ENCODE measurements at regions of chr16 and their contacts with region 1.

Region 1: DNA sequence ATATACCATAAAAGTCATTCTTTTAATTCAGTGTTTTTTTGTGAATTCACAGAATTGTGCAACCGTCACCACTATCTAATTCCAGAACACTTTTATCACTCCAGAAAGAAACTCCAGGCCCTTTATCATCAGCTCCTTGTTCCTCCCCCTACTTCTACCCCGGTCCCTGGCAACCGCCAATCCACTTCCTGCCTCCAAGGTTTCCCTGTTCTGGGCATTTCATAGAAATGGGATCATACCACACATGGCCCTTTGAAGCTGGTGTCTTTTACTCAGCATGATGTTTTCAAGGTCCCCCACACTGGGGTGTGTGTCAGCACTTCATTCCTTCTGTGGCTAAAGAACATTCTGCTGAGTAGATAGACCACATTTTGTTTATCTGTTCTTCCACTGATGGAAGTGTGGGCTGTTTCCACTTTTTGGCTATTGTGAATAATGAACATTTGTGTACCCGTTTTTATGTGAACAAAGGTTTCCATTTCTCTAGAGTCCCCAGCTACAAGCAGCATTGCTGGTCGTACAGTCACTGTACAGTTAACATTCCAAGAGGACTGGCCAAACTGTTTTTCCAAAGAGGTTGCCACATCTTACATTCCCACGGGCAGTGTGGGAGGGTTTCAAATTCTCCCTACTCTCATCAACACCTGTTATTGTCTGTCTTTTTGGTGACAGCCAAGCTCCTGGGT is 75.8 kb upstream of the ZNF469 start:
- DNase-seq: peak; percentile 51 to 60
- ATAC-seq: peak; percentile 98
- H3K4me3 ChIP-seq: no peak overlapping the region
- H3K27ac ChIP-seq: no peak overlapping the region
- H3K4me1 ChIP-seq: peaks cover 8 to 14% of the 10 kb centered on the region in 2 donors
- H3K27me3 ChIP-seq: peaks cover 10 to 19% (median 18%) of the 10 kb centered on the region in 3 donors
- CTCF ChIP-seq: no peak
- POLR2A ChIP-seq: no peak

Region 2: GRCh38 chr16:88264611-88265285 is 42.3 kb before region 1 on chr16:
- in situ Hi-C with region 1: no loop called
- intact Hi-C with region 1: loop called (anchors 5 kb)
- DNase-seq: peak; percentile 96 to 99
- ATAC-seq: peak; percentile 88 to 92
- H3K4me3 ChIP-seq: peak overlapping the region in 1 of 4 donors; percentile 21
- H3K27ac ChIP-seq: peak overlapping the region in 3 of 4 donors; percentile 34 to 63 (median 44)
- H3K4me1 ChIP-seq: peaks cover 4 to 26% of the 10 kb centered on the region in 2 donors
- H3K27me3 ChIP-seq: no peaks in the 10 kb centered on the region
- CTCF ChIP-seq: no peak
- POLR2A ChIP-seq: no peak

Region 3: GRCh38 chr16:88383401-88384221 is 76.6 kb after region 1 on chr16:
- in situ Hi-C with region 1: no loop called
- intact Hi-C with region 1: loop called (anchors 5 kb)
- DNase-seq: peak in 1 of 2 donors; percentile 11
- ATAC-seq: peak; percentile 25 to 38
- H3K4me3 ChIP-seq: peak overlapping the region; percentile 23 to 48 (median 34)
- H3K27ac ChIP-seq: peak overlapping the region in 1 of 4 donors; percentile 55
- H3K4me1 ChIP-seq: peaks cover 5 to 29% of the 10 kb centered on the region in 2 donors
- H3K27me3 ChIP-seq: no peaks in the 10 kb centered on the region
- CTCF ChIP-seq: peak in 4 of 5 experiments; percentile 15 to 61 (median 49)
- POLR2A ChIP-seq: no peak

Measured in gastrocnemius medialis (tissue), 4 donors.